Caco-2 (cell line): ENCODE measurements at regions of chr1 and their contacts with region 1.

Region 1: DNA sequence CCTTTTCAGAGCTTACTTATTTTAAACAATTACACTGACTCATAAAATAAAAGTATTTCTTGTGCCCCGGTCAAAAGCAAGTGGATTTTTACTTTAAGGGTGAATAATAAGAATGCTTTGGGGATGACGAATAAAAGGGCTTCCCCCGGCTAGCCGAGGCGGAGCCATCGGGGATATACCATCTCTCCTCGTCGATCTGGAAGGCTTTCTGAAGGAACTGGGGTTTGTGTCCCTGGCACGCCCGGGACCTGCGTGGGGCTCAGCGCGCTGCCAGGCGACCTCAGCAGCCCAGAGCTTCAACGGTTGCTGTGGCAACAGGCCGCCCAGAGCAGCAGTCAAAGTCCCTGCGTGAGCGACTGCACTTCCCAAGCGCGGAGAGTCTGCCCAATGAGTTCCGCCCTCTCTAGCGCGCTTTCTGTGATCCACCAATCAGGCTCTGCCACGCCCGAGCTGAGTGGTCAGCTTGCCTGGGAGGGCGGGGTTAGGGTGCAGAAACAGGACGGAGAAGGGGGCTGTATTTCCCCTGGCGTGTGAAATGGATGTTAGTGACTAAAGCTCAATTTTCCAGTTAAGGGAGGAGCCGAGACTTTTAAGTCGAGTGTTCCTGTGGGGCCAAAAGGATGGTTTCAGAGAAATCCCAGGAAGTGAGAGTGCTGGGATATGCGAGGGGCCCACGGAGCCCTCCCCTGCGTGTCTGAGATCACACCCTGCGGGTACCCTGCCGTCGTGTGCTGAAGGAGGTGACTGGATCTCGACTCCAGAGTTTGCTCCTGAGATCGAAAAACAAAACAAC is 33.0 kb upstream of the MGST3 start:
- DNase-seq: peak; percentile 93 to 96
- H3K4me3 ChIP-seq: peak overlapping the region; percentile 64
- H3K4me3 Mint-ChIP-seq: peak overlapping the region; percentile 95
- H3K27ac Mint-ChIP-seq: peak overlapping the region; percentile 88
- H3K4me1 ChIP-seq: no peaks in the 10 kb centered on the region
- H3K4me1 Mint-ChIP-seq: peaks cover 20% of the 10 kb centered on the region
- H3K27me3 ChIP-seq: peaks cover 1% of the 10 kb centered on the region; the same call in 1 of the 2 replicates
- H3K27me3 Mint-ChIP-seq: peaks cover 7% of the 10 kb centered on the region
- CTCF ChIP-seq: no peak

Region 2: DNA sequence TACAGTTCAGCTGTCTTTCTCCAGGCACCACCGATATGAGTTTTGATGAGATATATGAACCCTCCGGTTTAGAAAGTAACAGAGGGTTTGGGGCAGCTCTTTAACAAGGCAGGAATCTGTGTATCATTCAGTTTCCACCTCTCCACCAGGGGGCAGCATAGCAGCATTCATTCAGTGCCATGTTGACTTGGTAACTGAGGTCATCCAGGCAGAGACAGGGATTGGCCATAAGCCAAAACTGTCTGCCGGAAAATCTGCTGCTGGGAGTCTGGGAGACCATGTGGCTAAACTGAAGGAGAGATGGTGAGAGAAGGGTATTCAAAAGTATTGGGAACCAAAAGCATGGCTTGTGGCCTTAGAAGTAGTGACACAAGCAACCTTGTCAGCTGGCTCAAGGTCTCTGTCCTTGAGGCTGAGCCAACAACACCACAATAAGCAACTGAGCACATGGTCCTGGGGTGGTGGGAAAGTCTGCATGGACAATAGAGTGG is 340.1 kb before region 1 on chr1:
- CTCF ChIA-PET with region 1: no interaction called
- POLR2A ChIA-PET with region 1: no interaction called
- intact Hi-C with region 1: loop called (anchors 10 kb)
- DNase-seq: peak; percentile 63 to 70
- H3K4me3 ChIP-seq: no peak overlapping the region
- H3K4me3 Mint-ChIP-seq: no peak overlapping the region
- H3K27ac Mint-ChIP-seq: no peak overlapping the region
- H3K4me1 ChIP-seq: no peaks in the 10 kb centered on the region
- H3K4me1 Mint-ChIP-seq: peaks cover 7% of the 10 kb centered on the region
- H3K27me3 ChIP-seq: no peaks in the 10 kb centered on the region
- H3K27me3 Mint-ChIP-seq: peaks cover 8% of the 10 kb centered on the region
- CTCF ChIP-seq: peak; percentile 54 to 69

Region 3: GRCh38 chr1:165403835-165404482 is 194.1 kb before region 1 on chr1:
- CTCF ChIA-PET with region 1: interaction called, 3 read pairs
- POLR2A ChIA-PET with region 1: no interaction called
- intact Hi-C with region 1: loop called (anchors 1 kb)
- DNase-seq: peak; percentile 42 to 62
- H3K4me3 ChIP-seq: no peak overlapping the region
- H3K4me3 Mint-ChIP-seq: no peak overlapping the region
- H3K27ac Mint-ChIP-seq: no peak overlapping the region
- H3K4me1 ChIP-seq: no peaks in the 10 kb centered on the region
- H3K4me1 Mint-ChIP-seq: no peaks in the 10 kb centered on the region
- H3K27me3 ChIP-seq: no peaks in the 10 kb centered on the region; the same call in 1 of the 2 replicates
- H3K27me3 Mint-ChIP-seq: peaks cover 7% of the 10 kb centered on the region
- CTCF ChIP-seq: peak; percentile 53 to 69

Region 4: GRCh38 chr1:165481820-165482532 is 116.1 kb before region 1 on chr1:
- CTCF ChIA-PET with region 1: no interaction called
- POLR2A ChIA-PET with region 1: no interaction called
- intact Hi-C with region 1: no loop called
- DNase-seq: peak in 1 of 2 experiments; percentile 2
- H3K4me3 ChIP-seq: no peak overlapping the region
- H3K4me3 Mint-ChIP-seq: no peak overlapping the region
- H3K27ac Mint-ChIP-seq: no peak overlapping the region
- H3K4me1 ChIP-seq: no peaks in the 10 kb centered on the region
- H3K4me1 Mint-ChIP-seq: no peaks in the 10 kb centered on the region
- H3K27me3 ChIP-seq: no peaks in the 10 kb centered on the region
- H3K27me3 Mint-ChIP-seq: peaks cover 7% of the 10 kb centered on the region
- CTCF ChIP-seq: no peak

Region 5: GRCh38 chr1:165630629-165631341 is 32.7 kb after region 1 on chr1 and contains the start of gene MGST3:
- CTCF ChIA-PET with region 1: interaction called, 4 read pairs
- POLR2A ChIA-PET with region 1: interaction called, 3 read pairs
- intact Hi-C with region 1: loop called (anchors 1 kb)
- DNase-seq: peak; percentile 96 to 97
- H3K4me3 ChIP-seq: peak within 1 kb of the TSS; percentile 72
- H3K4me3 Mint-ChIP-seq: no peak within 1 kb of the TSS
- H3K27ac Mint-ChIP-seq: no peak within 1 kb of the TSS
- H3K4me1 ChIP-seq: peaks cover 17% of the 10 kb centered on the region
- H3K4me1 Mint-ChIP-seq: peaks cover 26% of the 10 kb centered on the region
- H3K27me3 ChIP-seq: no peaks in the 10 kb centered on the region
- H3K27me3 Mint-ChIP-seq: no peaks in the 10 kb centered on the region
- CTCF ChIP-seq: no peak
- total RNA-seq, gene MGST3: 173 and 193 TPM in 2 replicates

Region 6: GRCh38 chr1:165697881-165698760 is 100.0 kb after region 1 on chr1 and contains the start of gene ALDH9A1:
- CTCF ChIA-PET with region 1: interaction called, 11 read pairs
- POLR2A ChIA-PET with region 1: no interaction called
- intact Hi-C with region 1: loop called (anchors 1 kb)
- DNase-seq: peak; percentile 89 to 90
- H3K4me3 ChIP-seq: peak within 1 kb of the TSS; percentile 77
- H3K4me3 Mint-ChIP-seq: peak within 1 kb of the TSS; percentile 99
- H3K27ac Mint-ChIP-seq: peak within 1 kb of the TSS; percentile 94
- H3K4me1 ChIP-seq: peaks cover 10% of the 10 kb centered on the region; the same call in 1 of the 2 replicates
- H3K4me1 Mint-ChIP-seq: peaks cover 10% of the 10 kb centered on the region
- H3K27me3 ChIP-seq: no peaks in the 10 kb centered on the region
- H3K27me3 Mint-ChIP-seq: peaks cover 3% of the 10 kb centered on the region
- CTCF ChIP-seq: peak; percentile 23 to 37
- total RNA-seq, gene ALDH9A1: 28.4 and 33.9 TPM in 2 replicates

Region 7: DNA sequence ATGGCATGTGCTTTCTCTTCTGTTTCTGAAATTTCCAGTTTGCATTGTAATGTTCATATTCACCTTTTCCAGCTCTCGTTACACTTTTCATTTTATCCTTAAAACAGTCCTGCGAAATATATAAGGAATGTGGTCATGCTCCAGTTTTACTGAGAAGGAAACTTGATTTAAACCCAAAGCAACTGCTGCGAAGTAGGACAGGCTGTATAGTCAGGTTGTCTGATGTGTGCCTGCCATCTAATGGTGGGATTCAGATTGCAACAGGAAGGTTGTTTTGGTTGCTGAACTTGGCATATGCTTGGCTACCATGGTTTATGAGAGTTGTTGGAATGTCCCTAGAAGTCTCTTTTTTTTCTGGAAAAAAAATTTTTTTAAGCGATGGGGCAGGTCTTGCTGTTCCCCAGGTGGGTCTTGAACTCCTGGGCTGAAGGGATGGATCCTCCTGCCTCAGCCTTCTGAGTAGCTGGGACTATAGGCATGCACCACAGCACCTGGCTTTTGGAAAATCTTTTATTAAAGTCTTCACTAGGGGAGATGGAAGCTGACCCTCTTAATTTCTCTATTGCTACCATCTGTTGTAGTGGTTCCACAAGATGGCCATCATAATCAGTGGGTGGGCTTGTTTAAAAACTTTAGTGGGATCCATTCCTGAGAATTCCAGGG is 316.2 kb after region 1 on chr1:
- CTCF ChIA-PET with region 1: no interaction called
- POLR2A ChIA-PET with region 1: no interaction called
- intact Hi-C with region 1: loop called (anchors 1 kb)
- DNase-seq: peak; percentile 59 to 75
- H3K4me3 ChIP-seq: no peak overlapping the region
- H3K4me3 Mint-ChIP-seq: no peak overlapping the region
- H3K27ac Mint-ChIP-seq: no peak overlapping the region
- H3K4me1 ChIP-seq: peaks cover 20% of the 10 kb centered on the region
- H3K4me1 Mint-ChIP-seq: peaks cover 16% of the 10 kb centered on the region
- H3K27me3 ChIP-seq: no peaks in the 10 kb centered on the region
- H3K27me3 Mint-ChIP-seq: no peaks in the 10 kb centered on the region
- CTCF ChIP-seq: peak; percentile 83